IMR-90 (cell line): ENCODE measurements at regions of chr6 and their contacts with region 1.

Region 1: DNA sequence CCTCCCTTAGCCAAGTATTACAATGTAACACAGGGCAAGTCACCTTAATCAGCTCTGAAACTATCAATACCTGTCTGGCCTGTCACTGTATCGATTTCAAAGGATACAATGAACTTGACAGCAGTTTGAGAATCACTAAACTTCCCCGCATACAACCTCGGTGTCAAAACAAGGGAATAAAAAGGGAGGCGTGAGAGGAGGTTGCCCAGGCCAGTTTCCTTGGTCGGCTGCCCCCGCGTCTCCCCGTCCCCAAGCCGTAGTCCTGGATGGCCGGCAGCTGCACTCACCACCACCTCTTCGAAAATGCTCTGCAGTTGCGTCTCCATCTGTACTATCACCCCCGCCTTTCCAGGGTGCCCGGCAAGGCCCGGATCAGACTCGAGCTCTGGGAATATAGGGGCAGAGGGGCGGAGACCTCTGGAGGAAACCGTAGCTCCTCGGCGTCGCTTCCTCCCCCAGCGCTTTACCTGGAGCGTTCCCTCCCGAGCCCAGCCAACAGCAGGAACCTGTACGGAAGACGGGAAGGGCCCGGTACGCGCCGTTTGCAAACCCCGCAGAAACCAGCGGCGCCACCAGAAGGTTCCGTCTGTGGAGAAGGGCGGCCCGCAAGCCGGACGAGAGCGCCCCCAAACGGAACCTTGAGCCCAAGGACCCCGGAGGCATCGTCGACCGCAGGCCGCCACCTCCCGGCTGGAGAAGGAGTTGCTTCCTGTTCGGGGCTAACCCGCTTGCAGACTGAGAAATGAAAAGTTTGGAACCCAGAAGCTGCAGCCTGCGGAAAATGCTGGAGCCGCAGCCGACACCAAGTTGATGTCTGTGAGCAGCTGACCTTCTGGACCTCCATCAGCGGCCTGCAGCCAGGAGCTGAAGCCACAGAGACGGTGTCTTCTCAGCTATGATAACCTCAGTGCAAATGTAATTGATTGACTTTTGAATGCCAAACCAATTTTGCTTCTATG is at the start of gene MED23:
- DNase-seq: peak; percentile 92
- ATAC-seq: peak; percentile 99
- H3K4me3 ChIP-seq: peak within 1 kb of the TSS; percentile 82
- H3K27ac ChIP-seq: peak within 1 kb of the TSS; percentile 62
- H3K4me1 ChIP-seq: no peaks in the 10 kb centered on the region
- H3K27me3 ChIP-seq: peaks cover 2% of the 10 kb centered on the region; the same call in 1 of the 2 replicates
- CTCF ChIP-seq: peak; percentile 100; the same call in 1 of the 2 replicates
- POLR2A ChIP-seq: peak; percentile 70; the same call in 1 of the 2 replicates
- RAD21 ChIP-seq: peak; percentile 74
- total RNA-seq, gene MED23: 38.3 and 40.7 TPM in 2 replicates

Region 2: GRCh38 chr6:131519670-131520436 is 108.2 kb before region 1 on chr6:
- CTCF ChIA-PET with region 1: interaction called, 3 read pairs
- POLR2A ChIA-PET with region 1: no interaction called
- dilution Hi-C with region 1: no loop called
- in situ Hi-C with region 1: no loop called
- intact Hi-C with region 1: loop called (anchors 1 kb)
- DNase-seq: peak; percentile 45
- ATAC-seq: peak; percentile 98
- H3K4me3 ChIP-seq: no peak overlapping the region
- H3K27ac ChIP-seq: no peak overlapping the region
- H3K4me1 ChIP-seq: no peaks in the 10 kb centered on the region
- H3K27me3 ChIP-seq: no peaks in the 10 kb centered on the region; the same call in 1 of the 2 replicates
- CTCF ChIP-seq: peak; percentile 54
- POLR2A ChIP-seq: no peak
- RAD21 ChIP-seq: peak; percentile 46

Region 3: GRCh38 chr6:131602781-131603312 is 25.2 kb before region 1 on chr6:
- CTCF ChIA-PET with region 1: interaction called, 13 read pairs
- POLR2A ChIA-PET with region 1: no interaction called
- dilution Hi-C with region 1: no loop called
- in situ Hi-C with region 1: no loop called
- intact Hi-C with region 1: no loop called
- DNase-seq: peak; percentile 97
- ATAC-seq: peak; percentile 98
- H3K4me3 ChIP-seq: no peak overlapping the region
- H3K27ac ChIP-seq: no peak overlapping the region
- H3K4me1 ChIP-seq: peaks cover 2% of the 10 kb centered on the region; the same call in 1 of the 2 replicates
- H3K27me3 ChIP-seq: no peaks in the 10 kb centered on the region
- CTCF ChIP-seq: no peak
- POLR2A ChIP-seq: no peak
- RAD21 ChIP-seq: no peak